ENCODE measurements at regions of chr11 and their contacts with region 1.

Region 1: GRCh38 chr11:111230122-111230465 is 15.4 kb upstream of the POU2AF2 start:
- DNase-seq: no peak
- ATAC-seq: peak; percentile 62
- H3K4me3 ChIP-seq: no peak overlapping the region
- H3K27ac ChIP-seq: no peak overlapping the region
- H3K4me1 ChIP-seq: no peaks in the 10 kb centered on the region; a peak in 1 of 5 replicates
- H3K27me3 ChIP-seq: no peaks in the 10 kb centered on the region
- CTCF ChIP-seq: no peak
- EP300 ChIP-seq: no peak
- POLR2A ChIP-seq: no peak
- RAD21 ChIP-seq: no peak

Region 2: GRCh38 chr11:110086892-110087309 is 1143.2 kb before region 1 on chr11:
- CTCF ChIA-PET with region 1: no interaction called
- POLR2A ChIA-PET with region 1: no interaction called
- in situ Hi-C with region 1: no loop called
- intact Hi-C with region 1: loop called (anchors 5 kb)
- DNase-seq: no peak
- ATAC-seq: no peak
- H3K4me3 ChIP-seq: no peak overlapping the region
- H3K27ac ChIP-seq: no peak overlapping the region
- H3K4me1 ChIP-seq: peaks cover 0 to 18% of the 10 kb centered on the region in 2 experiments; a peak in 2 of 5 replicates
- H3K27me3 ChIP-seq: no peaks in the 10 kb centered on the region
- CTCF ChIP-seq: no peak
- EP300 ChIP-seq: no peak
- POLR2A ChIP-seq: no peak
- RAD21 ChIP-seq: no peak

Region 3: GRCh38 chr11:110447897-110448745 is 782.0 kb before region 1 on chr11:
- CTCF ChIA-PET with region 1: interaction called, 3 read pairs
- POLR2A ChIA-PET with region 1: no interaction called
- in situ Hi-C with region 1: no loop called
- intact Hi-C with region 1: loop called (anchors 1 kb)
- DNase-seq: no peak
- ATAC-seq: peak; percentile 55; the same call in 1 of the 3 replicates
- H3K4me3 ChIP-seq: no peak overlapping the region
- H3K27ac ChIP-seq: no peak overlapping the region
- H3K4me1 ChIP-seq: peaks cover 0 to 4% of the 10 kb centered on the region in 2 experiments; a peak in 1 of 5 replicates
- H3K27me3 ChIP-seq: no peaks in the 10 kb centered on the region
- CTCF ChIP-seq: peak in 2 of 3 experiments; percentile 10 to 50; a peak in 3 of 6 replicates
- EP300 ChIP-seq: no peak
- POLR2A ChIP-seq: no peak
- RAD21 ChIP-seq: peak; percentile 37 to 46; a peak in 3 of 4 replicates

Region 4: GRCh38 chr11:110463153-110463552 is 766.9 kb before region 1 on chr11:
- CTCF ChIA-PET with region 1: interaction called, 7 read pairs
- POLR2A ChIA-PET with region 1: no interaction called
- in situ Hi-C with region 1: loop called (anchors 10 kb)
- intact Hi-C with region 1: loop called (anchors 1 kb)
- DNase-seq: peak in 2 of 4 experiments; percentile 12 to 51
- ATAC-seq: peak; percentile 99
- H3K4me3 ChIP-seq: no peak overlapping the region
- H3K27ac ChIP-seq: no peak overlapping the region
- H3K4me1 ChIP-seq: no peaks in the 10 kb centered on the region
- H3K27me3 ChIP-seq: no peaks in the 10 kb centered on the region
- CTCF ChIP-seq: peak; percentile 48 to 55 (median 54); a peak in 5 of 6 replicates
- EP300 ChIP-seq: no peak
- POLR2A ChIP-seq: no peak
- RAD21 ChIP-seq: peak; percentile 73

Region 5: GRCh38 chr11:111047374-111047773 is 182.7 kb before region 1 on chr11:
- CTCF ChIA-PET with region 1: no interaction called
- POLR2A ChIA-PET with region 1: no interaction called
- in situ Hi-C with region 1: no loop called
- intact Hi-C with region 1: no loop called
- DNase-seq: no peak
- ATAC-seq: no peak
- H3K4me3 ChIP-seq: no peak overlapping the region
- H3K27ac ChIP-seq: no peak overlapping the region
- H3K4me1 ChIP-seq: no peaks in the 10 kb centered on the region
- H3K27me3 ChIP-seq: no peaks in the 10 kb centered on the region
- CTCF ChIP-seq: no peak
- EP300 ChIP-seq: no peak
- POLR2A ChIP-seq: no peak
- RAD21 ChIP-seq: no peak

Region 6: GRCh38 chr11:111310088-111310487 is 80.0 kb after region 1 on chr11:
- CTCF ChIA-PET with region 1: no interaction called
- POLR2A ChIA-PET with region 1: no interaction called
- in situ Hi-C with region 1: no loop called
- intact Hi-C with region 1: no loop called
- DNase-seq: no peak
- ATAC-seq: no peak
- H3K4me3 ChIP-seq: no peak overlapping the region
- H3K27ac ChIP-seq: no peak overlapping the region
- H3K4me1 ChIP-seq: no peaks in the 10 kb centered on the region
- H3K27me3 ChIP-seq: peaks cover 0 to 8% of the 10 kb centered on the region in 2 experiments; a peak in 2 of 5 replicates
- CTCF ChIP-seq: no peak
- EP300 ChIP-seq: no peak
- POLR2A ChIP-seq: no peak
- RAD21 ChIP-seq: no peak

Region 7: GRCh38 chr11:111359223-111360149 is 129.4 kb after region 1 on chr11:
- CTCF ChIA-PET with region 1: no interaction called
- POLR2A ChIA-PET with region 1: no interaction called
- in situ Hi-C with region 1: no loop called
- intact Hi-C with region 1: no loop called
- DNase-seq: peak in 1 of 4 experiments; percentile 17
- ATAC-seq: peak; percentile 44
- H3K4me3 ChIP-seq: no peak overlapping the region
- H3K27ac ChIP-seq: no peak overlapping the region
- H3K4me1 ChIP-seq: peaks cover 0 to 3% of the 10 kb centered on the region in 2 experiments; a peak in 1 of 5 replicates
- H3K27me3 ChIP-seq: peaks cover 0 to 5% of the 10 kb centered on the region in 2 experiments; a peak in 1 of 5 replicates
- CTCF ChIP-seq: no peak; a peak in 1 of 6 replicates
- EP300 ChIP-seq: no peak
- POLR2A ChIP-seq: no peak
- RAD21 ChIP-seq: no peak